K562 (cell line): ENCODE measurements at regions of chr7 and their contacts with region 1.

Region 1: GRCh38 chr7:140010194-140010895 is 52.4 kb downstream of the PARP12 start:
- DNase-seq: no peak
- ATAC-seq: no peak
- H3K4me3 ChIP-seq: no peak overlapping the region
- H3K27ac ChIP-seq: no peak overlapping the region
- H3K4me1 ChIP-seq: peaks cover 4 to 9% of the 10 kb centered on the region in 2 experiments; a peak in 3 of 5 replicates
- H3K27me3 ChIP-seq: peaks cover 36 to 55% of the 10 kb centered on the region in 2 experiments
- CTCF ChIP-seq: no peak
- EP300 ChIP-seq: no peak
- POLR2A ChIP-seq: no peak
- RAD21 ChIP-seq: no peak

Region 2: DNA sequence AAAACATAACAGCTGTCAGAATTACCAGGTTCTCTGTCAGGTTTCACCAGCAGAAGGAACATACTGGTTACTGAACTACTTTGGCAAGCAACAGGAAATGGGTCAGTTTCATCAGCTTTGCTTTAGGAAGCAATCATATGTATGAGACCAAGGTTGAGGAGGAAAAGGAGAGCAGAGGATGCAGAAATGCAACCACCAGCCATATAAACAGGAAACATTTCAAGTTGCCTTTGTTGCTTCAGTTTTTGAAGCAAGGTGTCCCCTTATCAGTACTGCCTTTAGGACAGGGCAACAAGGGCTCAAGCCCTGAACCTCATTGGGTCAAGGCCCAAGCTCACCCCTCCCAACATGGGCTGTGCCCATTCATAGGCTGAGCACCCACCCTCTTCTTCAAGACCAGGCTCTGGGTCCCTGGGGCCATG is 242.8 kb before region 1 on chr7:
- CTCF ChIA-PET with region 1: no interaction called
- POLR2A ChIA-PET with region 1: no interaction called
- in situ Hi-C with region 1: no loop called
- intact Hi-C with region 1: no loop called
- DNase-seq: no peak
- ATAC-seq: peak; percentile 36
- H3K4me3 ChIP-seq: no peak overlapping the region
- H3K27ac ChIP-seq: no peak overlapping the region
- H3K4me1 ChIP-seq: peaks cover 0 to 3% of the 10 kb centered on the region in 2 experiments; a peak in 3 of 5 replicates
- H3K27me3 ChIP-seq: no peaks in the 10 kb centered on the region; a peak in 1 of 5 replicates
- CTCF ChIP-seq: no peak
- EP300 ChIP-seq: no peak
- POLR2A ChIP-seq: no peak
- RAD21 ChIP-seq: no peak

Region 3: DNA sequence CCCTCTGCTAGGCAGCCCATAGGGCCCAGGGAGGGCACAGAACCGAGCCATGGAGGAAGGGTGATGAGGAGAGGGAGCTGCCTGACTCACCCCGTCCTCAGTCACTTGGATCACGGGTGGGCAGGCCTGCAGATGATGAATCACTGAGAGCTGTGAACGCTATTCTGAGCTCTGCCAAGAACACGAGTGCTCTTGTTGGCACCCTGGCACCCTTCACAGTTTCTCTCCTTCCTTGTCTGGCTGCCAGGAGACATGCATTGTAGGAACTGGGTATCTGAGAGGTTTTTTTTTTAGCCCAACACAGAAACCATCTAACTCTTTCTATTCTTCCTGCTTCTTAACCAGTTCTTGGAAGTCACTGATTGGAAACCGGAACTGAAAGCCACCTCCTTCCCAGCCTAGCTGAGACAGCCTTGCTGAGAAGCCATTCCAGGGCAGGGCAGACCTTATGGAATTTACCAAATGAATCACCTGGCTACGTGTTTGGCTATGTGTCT is 305.9 kb after region 1 on chr7:
- CTCF ChIA-PET with region 1: no interaction called
- POLR2A ChIA-PET with region 1: no interaction called
- in situ Hi-C with region 1: loop called (anchors 5 kb)
- intact Hi-C with region 1: no loop called
- DNase-seq: peak in 1 of 4 experiments; percentile 43
- ATAC-seq: peak; percentile 35
- H3K4me3 ChIP-seq: no peak overlapping the region
- H3K27ac ChIP-seq: no peak overlapping the region
- H3K4me1 ChIP-seq: peaks cover 25 to 29% of the 10 kb centered on the region in 2 experiments
- H3K27me3 ChIP-seq: no peaks in the 10 kb centered on the region
- CTCF ChIP-seq: no peak
- EP300 ChIP-seq: no peak
- POLR2A ChIP-seq: no peak
- RAD21 ChIP-seq: no peak

Region 4: DNA sequence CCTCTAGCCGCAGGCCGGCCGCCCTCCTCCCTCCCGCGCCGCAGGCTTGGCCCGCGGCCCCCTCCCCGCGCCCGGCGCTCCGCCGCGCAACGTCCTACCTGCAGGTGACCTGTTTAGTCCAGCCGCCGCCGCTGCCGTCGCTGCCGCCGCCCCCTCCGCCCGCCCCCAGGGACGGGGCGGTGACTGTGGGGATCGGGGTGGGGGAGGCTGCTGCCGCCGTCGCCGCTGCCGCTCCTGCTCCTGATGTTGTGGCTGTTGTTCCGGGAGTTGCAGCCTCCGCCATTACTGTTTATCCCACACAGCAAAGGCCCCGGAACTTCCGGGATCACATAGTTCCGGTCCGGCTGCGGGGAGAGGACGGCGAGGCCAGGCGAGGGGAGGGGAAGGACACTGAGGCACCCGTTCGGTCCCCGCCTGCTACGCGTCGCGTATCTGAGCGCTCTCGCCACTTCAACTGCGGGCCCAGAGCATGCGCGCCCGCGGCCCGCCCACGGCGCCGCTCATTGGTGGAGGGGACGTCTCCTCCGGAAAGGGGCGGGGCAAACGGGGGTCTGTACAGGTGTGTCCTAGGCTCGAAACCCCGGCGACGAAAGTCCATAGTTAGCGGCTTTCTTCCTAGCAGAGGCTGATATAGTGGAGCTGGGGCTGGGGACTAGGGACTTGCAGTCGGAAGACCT is 468.9 kb after region 1 on chr7 and contains the start of gene MKRN1:
- CTCF ChIA-PET with region 1: no interaction called
- POLR2A ChIA-PET with region 1: no interaction called
- in situ Hi-C with region 1: no loop called
- intact Hi-C with region 1: no loop called
- DNase-seq: peak; percentile 99 to 100 (median 100)
- ATAC-seq: peak; percentile 94
- H3K4me3 ChIP-seq: peak within 1 kb of the TSS; percentile 93
- H3K27ac ChIP-seq: peak within 1 kb of the TSS; percentile 91
- H3K4me1 ChIP-seq: peaks cover 12 to 35% of the 10 kb centered on the region in 2 experiments
- H3K27me3 ChIP-seq: no peaks in the 10 kb centered on the region
- CTCF ChIP-seq: no peak; a peak in 1 of 6 replicates
- EP300 ChIP-seq: no peak
- POLR2A ChIP-seq: peak; percentile 94
- RAD21 ChIP-seq: no peak; a peak in 1 of 4 replicates
- polyA plus RNA-seq, gene MKRN1: 30.5 to 33.5 TPM